Heart left ventricle (tissue), 16 donors: ENCODE measurements at regions of chr11 and their contacts with region 1.

Region 1: GRCh38 chr11:102007567-102008437 is 39.4 kb upstream of the CFAP300 start:
- DNase-seq: no peak
- ATAC-seq: peak in 2 of 4 donors; percentile 55 to 68
- H3K4me3 ChIP-seq: no peak overlapping the region
- H3K27ac ChIP-seq: no peak overlapping the region
- H3K4me1 ChIP-seq: peaks cover 0 to 19% (median 6%) of the 10 kb centered on the region in 12 donors
- H3K27me3 ChIP-seq: no peaks in the 10 kb centered on the region
- CTCF ChIP-seq: peak; percentile 51 to 72 (median 62)
- POLR2A ChIP-seq: no peak

Region 2: GRCh38 chr11:101456812-101457211 is 551.0 kb before region 1 on chr11:
- intact Hi-C with region 1: loop called in 3 of 10 experiments (anchors 10 kb)
- DNase-seq: no peak
- ATAC-seq: no peak
- H3K4me3 ChIP-seq: no peak overlapping the region
- H3K27ac ChIP-seq: no peak overlapping the region
- H3K4me1 ChIP-seq: no peaks in the 10 kb centered on the region
- H3K27me3 ChIP-seq: no peaks in the 10 kb centered on the region
- CTCF ChIP-seq: peak in 11 of 12 donors; percentile 18 to 58 (median 45)
- POLR2A ChIP-seq: no peak

Region 3: DNA sequence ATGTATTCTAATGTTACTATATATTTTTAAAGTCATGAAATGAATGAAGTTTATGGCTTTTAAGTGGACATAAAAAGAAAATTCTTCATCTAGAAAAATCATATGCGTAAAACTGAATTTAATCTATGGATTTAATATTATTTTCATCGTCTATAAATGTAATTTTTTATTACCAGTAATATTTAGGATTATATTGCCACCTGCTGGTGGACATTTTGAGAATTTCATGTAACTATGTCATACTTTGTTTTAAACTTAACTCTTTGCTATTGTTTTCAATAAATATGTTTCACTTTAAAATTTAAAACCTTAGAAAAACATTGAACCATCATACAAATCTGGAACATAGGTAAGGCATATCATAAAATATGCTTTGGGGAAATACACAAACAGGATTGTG is 159.5 kb before region 1 on chr11:
- intact Hi-C with region 1: no loop called
- DNase-seq: no peak
- ATAC-seq: no peak
- H3K4me3 ChIP-seq: no peak overlapping the region
- H3K27ac ChIP-seq: no peak overlapping the region
- H3K4me1 ChIP-seq: no peaks in the 10 kb centered on the region
- H3K27me3 ChIP-seq: no peaks in the 10 kb centered on the region
- CTCF ChIP-seq: peak; percentile 21 to 63 (median 36)
- POLR2A ChIP-seq: no peak

Region 4: DNA sequence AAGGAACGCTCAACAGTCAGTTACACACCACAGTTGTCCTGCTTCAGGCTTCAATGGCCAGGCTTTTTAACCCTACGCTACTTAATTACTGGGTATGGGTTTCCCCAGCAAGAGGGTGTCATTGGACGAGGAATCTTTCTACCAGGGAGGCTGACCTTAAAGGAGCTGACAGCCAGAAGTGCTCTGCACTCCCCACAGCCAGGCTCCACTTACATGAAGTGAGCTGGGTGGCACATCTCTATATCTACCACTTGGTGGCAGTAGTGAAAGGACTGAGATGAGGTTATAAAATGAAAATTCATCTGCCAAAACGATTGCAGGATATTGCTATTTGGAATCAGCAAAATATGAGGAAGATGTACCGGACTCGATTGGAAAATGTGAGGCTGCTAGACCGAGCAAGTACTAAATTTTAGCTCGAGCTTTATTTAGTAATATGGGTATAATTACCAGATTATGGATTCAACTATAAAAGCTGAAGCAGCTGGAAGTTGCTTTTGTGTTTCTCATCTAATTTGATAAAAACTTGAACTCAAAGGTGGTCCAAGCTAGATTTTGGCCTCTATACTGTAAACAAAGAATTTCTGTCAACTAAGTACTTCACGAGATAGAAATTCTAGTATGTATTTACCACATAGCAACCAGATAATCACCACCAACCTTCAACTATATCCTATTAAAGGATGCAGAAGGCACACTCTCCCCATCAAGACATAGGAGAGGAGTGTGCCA is 146.9 kb before region 1 on chr11:
- intact Hi-C with region 1: loop called (anchors 1 to 5 kb)
- DNase-seq: peak in 3 of 5 donors; percentile 19 to 44 (median 23)
- ATAC-seq: peak in 3 of 4 donors; percentile 79 to 93 (median 89)
- H3K4me3 ChIP-seq: no peak overlapping the region
- H3K27ac ChIP-seq: no peak overlapping the region
- H3K4me1 ChIP-seq: peaks cover 0 to 4% (median 0%) of the 10 kb centered on the region in 12 donors
- H3K27me3 ChIP-seq: no peaks in the 10 kb centered on the region
- CTCF ChIP-seq: peak; percentile 58 to 84 (median 74)
- POLR2A ChIP-seq: no peak

Region 5: DNA sequence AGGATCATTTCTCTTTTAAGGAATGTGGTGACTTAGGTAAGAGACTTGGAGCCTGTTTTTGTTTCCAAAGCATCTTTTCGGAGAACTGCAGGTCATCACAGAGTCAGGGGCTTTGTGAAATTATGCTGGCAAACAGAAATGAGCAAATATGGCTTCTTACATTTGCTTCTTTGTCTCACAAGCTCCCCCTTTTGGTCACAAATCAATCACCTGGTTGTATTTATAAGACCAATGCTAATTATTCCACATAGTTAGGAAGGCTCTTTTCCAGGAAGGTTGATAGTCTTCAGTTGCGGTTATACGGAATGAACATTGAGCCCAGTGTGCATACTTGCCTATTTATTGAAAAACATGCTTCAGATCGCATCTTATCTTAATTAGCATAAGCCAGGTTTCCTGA is 127.6 kb before region 1 on chr11:
- intact Hi-C with region 1: no loop called
- DNase-seq: no peak
- ATAC-seq: no peak
- H3K4me3 ChIP-seq: no peak overlapping the region
- H3K27ac ChIP-seq: no peak overlapping the region
- H3K4me1 ChIP-seq: no peaks in the 10 kb centered on the region
- H3K27me3 ChIP-seq: peaks cover 0 to 4% (median 0%) of the 10 kb centered on the region in 9 donors
- CTCF ChIP-seq: peak in 1 of 12 donors; percentile 15
- POLR2A ChIP-seq: no peak

Region 6: GRCh38 chr11:101914738-101915426 is 92.9 kb before region 1 on chr11 and contains the start of gene CEP126:
- intact Hi-C with region 1: loop called in 2 of 10 experiments (anchors 5 to 10 kb)
- DNase-seq: peak; percentile 93 to 97 (median 95)
- ATAC-seq: peak; percentile 93 to 99 (median 98)
- H3K4me3 ChIP-seq: peak within 1 kb of the TSS; percentile 48 to 82 (median 72)
- H3K27ac ChIP-seq: peak within 1 kb of the TSS; percentile 52 to 86 (median 74)
- H3K4me1 ChIP-seq: peaks cover 0 to 27% (median 7%) of the 10 kb centered on the region in 12 donors
- H3K27me3 ChIP-seq: no peaks in the 10 kb centered on the region
- CTCF ChIP-seq: peak; percentile 15 to 75 (median 40)
- POLR2A ChIP-seq: peak in 1 of 2 donors; percentile 17
- total RNA-seq, gene CEP126: 0.82 to 1.8 (median 1.1) TPM

Region 7: DNA sequence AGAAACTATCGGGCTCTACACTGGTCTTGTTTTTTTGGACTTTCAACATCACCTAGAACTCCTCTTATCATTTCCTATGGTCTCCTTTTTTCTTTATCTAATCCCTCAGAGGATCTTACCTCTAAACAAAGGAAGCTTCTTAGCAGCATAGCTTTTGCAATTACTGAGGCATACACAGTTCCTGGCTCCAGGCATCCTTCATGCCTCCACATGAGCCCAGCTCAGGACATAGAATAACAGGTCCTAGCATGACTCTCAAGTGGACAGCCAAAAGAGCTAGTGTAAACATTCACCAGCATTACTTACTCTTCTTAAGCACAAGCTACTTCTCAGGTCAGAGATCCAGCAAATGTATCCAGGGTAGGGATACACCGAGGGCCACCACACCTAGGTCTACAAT is 56.5 kb after region 1 on chr11:
- intact Hi-C with region 1: no loop called
- DNase-seq: no peak
- ATAC-seq: no peak
- H3K4me3 ChIP-seq: no peak overlapping the region
- H3K27ac ChIP-seq: no peak overlapping the region
- H3K4me1 ChIP-seq: no peaks in the 10 kb centered on the region
- H3K27me3 ChIP-seq: no peaks in the 10 kb centered on the region
- CTCF ChIP-seq: no peak
- POLR2A ChIP-seq: no peak